ENCODE measurements at regions of chr2 and their contacts with region 1.

Region 1: GRCh38 chr2:120904830-120905234 is 169.2 kb downstream of the GLI2 start:
- DNase-seq: no peak
- H3K4me3 ChIP-seq: no peak overlapping the region
- H3K27ac ChIP-seq: no peak overlapping the region
- H3K4me1 ChIP-seq: peaks cover 0 to 17% (median 10%) of the 10 kb centered on the region in 4 experiments
- H3K27me3 ChIP-seq: no peaks in the 10 kb centered on the region
- CTCF ChIP-seq: no peak
- EP300 ChIP-seq: no peak
- POLR2A ChIP-seq: no peak
- RAD21 ChIP-seq: no peak

Region 2: GRCh38 chr2:120914839-120915521 is 10.1 kb after region 1 on chr2:
- CTCF ChIA-PET with region 1: interaction called, 11 read pairs
- POLR2A ChIA-PET with region 1: no interaction called
- DNase-seq: no peak
- H3K4me3 ChIP-seq: no peak overlapping the region
- H3K27ac ChIP-seq: no peak overlapping the region; the same call in 1 of the 2 replicates
- H3K4me1 ChIP-seq: peaks cover 0 to 12% (median 8%) of the 10 kb centered on the region in 4 experiments; a peak in 6 of 7 replicates
- H3K27me3 ChIP-seq: no peaks in the 10 kb centered on the region
- CTCF ChIP-seq: no peak
- EP300 ChIP-seq: no peak
- POLR2A ChIP-seq: no peak
- RAD21 ChIP-seq: no peak

Region 3: GRCh38 chr2:120920454-120921148 is 15.8 kb after region 1 on chr2:
- CTCF ChIA-PET with region 1: interaction called, 16 read pairs
- POLR2A ChIA-PET with region 1: no interaction called
- DNase-seq: no peak
- H3K4me3 ChIP-seq: no peak overlapping the region
- H3K27ac ChIP-seq: no peak overlapping the region
- H3K4me1 ChIP-seq: peaks cover 0 to 3% (median 0%) of the 10 kb centered on the region in 4 experiments; a peak in 2 of 7 replicates
- H3K27me3 ChIP-seq: no peaks in the 10 kb centered on the region
- CTCF ChIP-seq: no peak
- EP300 ChIP-seq: no peak
- POLR2A ChIP-seq: no peak
- RAD21 ChIP-seq: no peak

Region 4: DNA sequence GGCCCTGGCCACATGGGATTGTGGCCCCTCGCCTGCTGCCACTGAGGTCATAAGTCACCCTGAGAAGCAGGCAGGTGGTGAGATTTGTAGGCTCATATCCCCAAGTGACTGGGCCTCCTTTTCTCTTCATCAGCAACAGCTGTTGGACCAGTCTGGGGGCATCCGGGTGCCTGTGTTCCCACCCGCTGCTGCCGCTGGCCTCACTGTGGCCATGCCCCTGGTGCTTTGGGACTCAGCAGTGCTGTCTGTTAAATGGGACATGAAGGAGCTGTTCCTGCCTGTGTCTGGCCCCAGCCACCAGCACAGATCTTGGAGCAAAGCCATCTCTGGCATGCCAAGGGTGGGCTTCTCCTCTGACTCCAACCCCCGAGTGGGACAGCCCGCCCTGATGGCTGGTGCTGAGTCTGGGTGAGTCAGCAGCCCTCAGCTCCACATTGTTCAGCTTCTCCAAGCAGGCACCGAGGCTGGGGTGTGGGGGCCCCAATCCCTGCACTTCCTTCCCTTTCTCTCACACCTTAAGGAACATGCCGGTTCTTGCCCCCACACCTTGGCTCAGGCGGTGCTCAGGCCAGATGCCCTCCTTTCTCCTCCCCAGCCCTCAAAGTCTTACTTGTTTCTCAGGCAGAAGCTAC is 38.7 kb after region 1 on chr2:
- CTCF ChIA-PET with region 1: no interaction called
- POLR2A ChIA-PET with region 1: no interaction called
- DNase-seq: no peak
- H3K4me3 ChIP-seq: no peak overlapping the region
- H3K27ac ChIP-seq: no peak overlapping the region
- H3K4me1 ChIP-seq: peaks cover 0 to 3% (median 0%) of the 10 kb centered on the region in 4 experiments; a peak in 1 of 7 replicates
- H3K27me3 ChIP-seq: no peaks in the 10 kb centered on the region
- CTCF ChIP-seq: no peak
- EP300 ChIP-seq: no peak
- POLR2A ChIP-seq: no peak
- RAD21 ChIP-seq: no peak